A549 (cell line): ENCODE measurements at regions of chr11 and their contacts with region 1.

Region 1: GRCh38 chr11:119323538-119324033 is 6.7 kb upstream of the MCAM start:
- DNase-seq: peak in 1 of 2 experiments; percentile 63
- ATAC-seq: peak in 1 of 2 experiments; percentile 41; a peak in 3 of 6 replicates
- H3K4me3 ChIP-seq: no peak overlapping the region
- H3K27ac ChIP-seq: no peak overlapping the region
- H3K4me1 ChIP-seq: peaks cover 22% of the 10 kb centered on the region
- CTCF ChIP-seq: peak; percentile 69
- EP300 ChIP-seq: no peak
- POLR2A ChIP-seq: no peak
- RAD21 ChIP-seq: peak; percentile 47 to 64; a peak in 4 of 5 replicates

Region 2: GRCh38 chr11:119205574-119206510 is 117.7 kb before region 1 on chr11 and contains the start of gene CBL:
- CTCF ChIA-PET with region 1: interaction called, 12 read pairs
- POLR2A ChIA-PET with region 1: no interaction called
- DNase-seq: peak; percentile 85 to 91
- ATAC-seq: peak; percentile 92 to 93
- H3K4me3 ChIP-seq: peak within 1 kb of the TSS; percentile 98
- H3K27ac ChIP-seq: peak within 1 kb of the TSS; percentile 94 to 99
- H3K4me1 ChIP-seq: peaks cover 21% of the 10 kb centered on the region
- CTCF ChIP-seq: peak; percentile 73
- EP300 ChIP-seq: no peak
- POLR2A ChIP-seq: peak; percentile 27
- RAD21 ChIP-seq: peak in 1 of 2 experiments; percentile 46; a peak in 4 of 5 replicates
- polyA plus RNA-seq, gene CBL: 14.1 and 14.9 TPM in 2 replicates

Region 3: DNA sequence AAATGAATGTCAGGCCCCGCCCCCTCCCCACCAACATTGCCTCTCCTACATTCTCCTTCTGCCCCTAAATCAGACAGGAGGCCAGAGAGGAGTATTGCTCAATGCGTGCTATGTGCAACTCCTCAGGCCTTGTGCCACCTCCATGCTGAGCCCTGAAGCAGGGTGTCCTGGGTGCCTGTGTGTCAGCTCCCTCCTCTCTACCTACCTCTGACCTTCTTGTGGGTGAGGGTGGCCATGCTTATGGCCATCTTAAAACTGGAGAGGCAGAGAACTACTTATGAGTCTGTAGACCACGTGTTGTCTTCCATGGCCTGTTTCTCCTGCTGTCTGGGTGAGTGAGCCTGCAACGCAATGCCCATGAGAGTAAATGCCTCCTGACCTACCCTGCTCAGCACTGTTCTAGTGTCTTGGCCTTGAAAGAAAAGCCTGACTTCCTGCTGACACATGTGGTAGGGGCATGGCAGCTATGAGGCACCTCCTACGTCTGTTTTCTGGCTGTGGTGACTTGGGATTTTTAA is 17.2 kb before region 1 on chr11:
- CTCF ChIA-PET with region 1: interaction called, 43 read pairs
- POLR2A ChIA-PET with region 1: no interaction called
- DNase-seq: no peak
- ATAC-seq: no peak
- H3K4me3 ChIP-seq: no peak overlapping the region
- H3K27ac ChIP-seq: no peak overlapping the region
- H3K4me1 ChIP-seq: no peaks in the 10 kb centered on the region
- CTCF ChIP-seq: no peak
- EP300 ChIP-seq: no peak
- POLR2A ChIP-seq: no peak
- RAD21 ChIP-seq: no peak

Region 4: DNA sequence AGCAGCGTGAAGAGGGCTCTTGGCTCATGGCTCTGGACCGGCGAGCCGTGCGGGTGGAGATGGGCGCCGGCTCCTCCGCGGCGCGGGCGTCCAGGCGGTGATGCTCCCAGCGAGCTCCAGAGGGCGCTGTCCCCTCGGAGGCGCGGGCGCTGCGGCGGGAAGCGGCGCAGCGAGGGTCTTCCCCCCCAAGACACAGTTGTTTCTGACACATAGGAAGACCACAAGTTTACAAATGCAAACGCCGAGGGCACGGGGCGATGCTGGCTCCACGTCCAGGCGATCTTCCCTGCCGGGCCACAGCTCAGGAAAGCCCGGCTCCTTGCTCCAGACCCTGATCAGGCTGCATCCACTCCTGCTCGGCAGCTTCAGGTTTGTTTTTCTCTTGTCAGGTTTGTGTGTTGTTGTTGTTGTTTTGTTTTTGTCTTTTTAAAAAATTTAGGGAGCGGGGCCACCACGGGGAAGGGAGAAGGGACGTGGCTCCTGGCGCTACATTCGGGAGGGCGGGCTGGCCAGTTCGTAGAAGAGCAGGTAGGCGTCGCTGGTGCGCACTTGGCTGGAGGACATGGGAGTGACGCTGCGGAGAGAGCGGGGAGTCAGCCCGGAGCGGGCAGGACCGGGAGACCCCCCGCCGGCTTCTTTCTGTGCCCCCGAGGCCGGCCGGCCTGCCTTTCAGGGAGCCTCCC is 32.9 kb after region 1 on chr11:
- CTCF ChIA-PET with region 1: interaction called, 11 read pairs
- POLR2A ChIA-PET with region 1: no interaction called
- DNase-seq: peak; percentile 70 to 90
- ATAC-seq: peak; percentile 82 to 89
- H3K4me3 ChIP-seq: peak overlapping the region; percentile 57
- H3K27ac ChIP-seq: peak overlapping the region; percentile 78 to 87
- H3K4me1 ChIP-seq: peaks cover 30% of the 10 kb centered on the region
- CTCF ChIP-seq: peak; percentile 90
- EP300 ChIP-seq: no peak
- POLR2A ChIP-seq: no peak
- RAD21 ChIP-seq: peak; percentile 60 to 79

Region 5: DNA sequence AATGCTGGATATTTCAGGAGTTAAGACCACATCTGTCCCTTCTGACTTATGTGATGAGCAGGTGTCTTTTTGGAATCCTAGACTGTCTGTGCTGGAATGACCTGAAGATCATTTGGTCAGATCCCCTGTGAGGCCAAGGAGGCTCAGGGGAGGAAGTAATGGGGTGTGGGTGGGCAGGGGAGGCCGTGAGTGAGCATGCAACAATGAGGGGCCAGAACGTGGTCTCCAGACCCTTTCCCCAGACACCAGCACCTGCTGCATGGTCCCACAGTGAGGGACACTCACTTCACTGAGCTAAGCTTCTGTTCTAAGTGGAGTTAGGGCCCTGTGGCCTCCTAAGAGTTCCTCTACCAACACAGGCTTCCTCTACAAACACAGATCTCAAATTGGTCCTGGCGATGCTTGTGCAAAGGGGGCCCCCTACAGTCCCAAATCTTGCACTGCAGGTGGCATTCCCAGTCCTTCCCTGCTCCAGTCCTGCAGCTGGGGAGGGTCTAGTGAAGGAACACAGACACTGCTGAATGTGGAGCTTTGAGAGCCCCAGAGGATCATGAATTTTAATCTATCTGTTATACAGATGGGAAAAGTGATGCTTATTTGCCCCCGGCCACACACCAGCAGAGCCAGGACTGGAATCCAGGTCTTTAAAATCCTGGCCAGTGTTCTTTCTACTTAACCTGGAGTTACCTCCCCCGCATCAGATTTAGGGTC is 50.5 kb after region 1 on chr11:
- CTCF ChIA-PET with region 1: interaction called, 14 read pairs
- POLR2A ChIA-PET with region 1: no interaction called
- DNase-seq: peak; percentile 52 to 72
- ATAC-seq: peak; percentile 67 to 87
- H3K4me3 ChIP-seq: no peak overlapping the region
- H3K27ac ChIP-seq: no peak overlapping the region
- H3K4me1 ChIP-seq: peaks cover 19% of the 10 kb centered on the region
- CTCF ChIP-seq: peak; percentile 73
- EP300 ChIP-seq: no peak
- POLR2A ChIP-seq: no peak
- RAD21 ChIP-seq: peak; percentile 80 to 88

Region 6: DNA sequence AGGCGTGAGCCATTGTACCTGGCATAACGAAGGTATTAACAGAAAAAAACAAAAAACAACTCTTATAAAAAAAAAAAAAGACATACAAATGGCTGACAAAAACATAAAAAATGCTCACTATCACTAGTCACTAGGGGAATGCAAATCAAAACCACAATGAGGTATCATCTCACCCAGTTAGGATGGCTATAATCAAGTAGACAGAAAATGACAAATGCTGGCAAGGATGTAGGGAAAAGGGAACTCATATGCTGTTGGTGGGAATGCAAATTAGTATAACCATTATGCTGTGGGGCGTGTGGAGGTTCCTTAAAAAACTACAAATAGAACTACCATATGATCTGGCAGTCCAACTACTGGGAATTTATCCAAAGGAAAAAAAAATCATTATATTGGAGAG is 82.4 kb after region 1 on chr11:
- CTCF ChIA-PET with region 1: no interaction called
- POLR2A ChIA-PET with region 1: no interaction called
- DNase-seq: no peak
- ATAC-seq: no peak
- H3K4me3 ChIP-seq: no peak overlapping the region
- H3K27ac ChIP-seq: no peak overlapping the region
- H3K4me1 ChIP-seq: no peaks in the 10 kb centered on the region
- CTCF ChIP-seq: no peak
- EP300 ChIP-seq: no peak
- POLR2A ChIP-seq: no peak
- RAD21 ChIP-seq: no peak

Region 7: GRCh38 chr11:119421941-119422808 is 98.6 kb after region 1 on chr11:
- CTCF ChIA-PET with region 1: no interaction called
- POLR2A ChIA-PET with region 1: no interaction called
- DNase-seq: no peak
- ATAC-seq: peak; percentile 55 to 73
- H3K4me3 ChIP-seq: peak overlapping the region; percentile 58
- H3K27ac ChIP-seq: peak overlapping the region; percentile 63 to 81; a peak in 5 of 6 replicates
- H3K4me1 ChIP-seq: peaks cover 6% of the 10 kb centered on the region; the same call in 1 of the 3 replicates
- CTCF ChIP-seq: no peak
- EP300 ChIP-seq: no peak
- POLR2A ChIP-seq: no peak
- RAD21 ChIP-seq: no peak

Region 8: DNA sequence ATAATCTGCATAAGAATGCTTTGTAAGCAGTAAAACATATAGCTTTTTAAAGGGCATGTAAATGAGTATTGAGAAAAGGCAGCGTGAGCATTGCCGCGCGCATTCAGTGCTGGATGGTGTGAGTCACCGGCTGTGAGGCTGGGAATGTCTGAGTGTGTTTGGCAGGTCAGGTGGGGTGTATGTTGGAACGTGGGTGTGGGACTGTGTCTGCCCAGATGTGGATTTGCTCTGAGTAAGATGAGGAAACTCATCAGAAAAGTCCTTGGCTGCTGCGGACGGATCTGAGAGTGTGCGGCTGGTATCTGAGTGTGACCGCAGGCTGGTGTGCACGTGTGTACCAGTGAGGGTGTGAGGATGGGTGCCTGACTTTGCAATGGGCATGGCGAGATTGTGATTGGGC is 471.6 kb after region 1 on chr11:
- CTCF ChIA-PET with region 1: no interaction called
- POLR2A ChIA-PET with region 1: no interaction called
- DNase-seq: peak; percentile 10 to 19
- ATAC-seq: peak; percentile 37 to 57; a peak in 3 of 6 replicates
- H3K4me3 ChIP-seq: no peak overlapping the region
- H3K27ac ChIP-seq: no peak overlapping the region
- H3K4me1 ChIP-seq: peaks cover 11% of the 10 kb centered on the region
- CTCF ChIP-seq: no peak
- EP300 ChIP-seq: no peak
- POLR2A ChIP-seq: no peak
- RAD21 ChIP-seq: no peak